Adrenal gland (tissue), 19 donors: ENCODE measurements at regions of chr17 and their contacts with region 1.

Region 1: DNA sequence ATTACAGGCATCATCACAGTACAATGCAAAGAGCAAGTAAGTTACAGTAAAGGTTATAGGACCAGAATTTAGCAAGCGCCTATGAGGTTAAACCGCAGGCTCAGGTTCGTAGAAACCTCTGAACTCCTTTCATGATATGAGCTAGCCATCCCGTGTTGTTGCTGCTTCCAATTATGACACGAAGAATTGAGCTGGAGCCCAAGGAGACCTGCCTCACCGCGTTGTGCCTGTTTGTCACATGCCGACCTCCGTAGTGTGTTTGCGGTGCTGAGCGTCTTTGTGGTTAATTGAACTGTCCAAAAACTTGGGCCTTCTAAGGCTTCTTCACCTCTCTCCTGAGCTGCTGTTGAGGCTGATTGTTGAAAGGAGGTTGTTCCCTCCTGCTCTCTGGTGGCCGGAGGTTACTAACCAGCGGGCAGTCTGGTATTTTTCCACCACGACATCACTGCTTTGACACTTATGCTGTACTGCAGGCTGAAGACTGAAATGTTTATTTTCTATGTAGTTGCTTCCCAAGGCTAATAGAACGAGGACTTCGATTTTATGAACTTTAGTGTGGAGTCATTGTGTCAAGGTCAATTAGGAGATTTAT is 67.5 kb downstream of the SEC14L1 start:
- DNase-seq: peak; percentile 75 to 94 (median 87)
- H3K4me3 ChIP-seq: no peak overlapping the region
- H3K27ac ChIP-seq: peak overlapping the region; percentile 49 to 83 (median 73)
- H3K4me1 ChIP-seq: peaks cover 21 to 32% of the 10 kb centered on the region in 2 donors
- H3K27me3 ChIP-seq: no peaks in the 10 kb centered on the region
- CTCF ChIP-seq: peak; percentile 13 to 73 (median 66)
- POLR2A ChIP-seq: peak in 1 of 2 donors; percentile 50

Region 2: DNA sequence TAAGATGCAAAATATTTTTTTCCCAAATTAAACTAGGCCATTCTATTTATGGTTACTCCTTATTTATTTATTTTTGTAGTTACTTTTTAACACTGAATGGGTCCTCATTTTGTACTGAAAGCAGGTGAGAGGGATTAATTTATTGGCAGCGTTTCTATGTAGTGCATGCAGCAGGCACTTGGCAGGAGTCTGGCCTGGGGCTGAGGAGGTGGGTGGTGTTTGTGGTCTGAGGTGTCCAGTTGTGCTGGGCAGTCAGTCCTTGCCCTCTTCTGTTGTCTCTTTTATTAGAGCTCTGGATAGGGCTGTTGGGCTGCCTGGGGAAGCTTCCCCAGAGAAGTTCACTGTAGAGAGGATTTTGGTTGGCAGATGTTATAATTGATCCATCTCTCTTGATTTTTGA is 54.8 kb before region 1 on chr17:
- intact Hi-C with region 1: loop called (anchors 10 kb)
- DNase-seq: no peak
- H3K4me3 ChIP-seq: no peak overlapping the region
- H3K27ac ChIP-seq: peak overlapping the region in 3 of 5 donors; percentile 48 to 66 (median 63)
- H3K4me1 ChIP-seq: peaks cover 35 to 81% of the 10 kb centered on the region in 2 donors
- H3K27me3 ChIP-seq: no peaks in the 10 kb centered on the region
- CTCF ChIP-seq: no peak
- POLR2A ChIP-seq: no peak

Region 3: DNA sequence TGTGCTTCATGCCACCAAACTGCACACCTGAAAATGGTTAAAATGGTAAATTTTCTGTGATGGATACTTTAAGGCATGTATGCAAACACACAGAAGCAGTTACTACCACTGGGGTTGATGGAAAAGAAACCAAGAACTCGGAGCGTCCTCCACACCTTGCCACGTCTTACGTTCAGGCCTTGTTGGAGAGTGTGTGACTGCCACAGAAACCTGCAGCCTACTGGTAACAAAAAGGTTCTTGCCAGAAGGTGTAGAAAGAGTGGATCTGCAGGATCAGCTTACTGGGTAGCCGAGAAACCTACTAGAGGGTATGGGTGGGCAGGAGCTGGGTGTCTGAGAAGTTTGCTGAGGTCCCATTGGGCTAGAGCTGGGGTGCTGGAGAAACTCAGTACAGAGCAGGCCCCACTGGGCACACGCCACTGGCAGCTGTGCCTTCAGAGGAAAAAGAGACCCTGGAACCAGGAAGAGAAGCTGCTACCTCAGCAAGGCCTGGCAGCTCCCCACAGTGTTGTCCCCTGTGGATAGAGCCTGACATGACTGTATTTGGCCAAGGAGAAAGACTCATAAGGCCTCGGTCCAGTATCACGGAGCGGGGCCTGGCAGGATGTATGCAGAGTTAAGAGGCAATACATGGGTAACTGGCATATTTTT is 137.1 kb after region 1 on chr17:
- intact Hi-C with region 1: no loop called
- DNase-seq: peak in 4 of 7 donors; percentile 8 to 51 (median 18)
- H3K4me3 ChIP-seq: no peak overlapping the region
- H3K27ac ChIP-seq: no peak overlapping the region
- H3K4me1 ChIP-seq: peaks cover 6 to 17% of the 10 kb centered on the region in 2 donors
- H3K27me3 ChIP-seq: no peaks in the 10 kb centered on the region
- CTCF ChIP-seq: no peak
- POLR2A ChIP-seq: no peak